Naive thymus-derived CD4-positive, alpha-beta T cell (primary cell): ENCODE measurements at regions of chr9 and their contacts with region 1.

Region 1: DNA sequence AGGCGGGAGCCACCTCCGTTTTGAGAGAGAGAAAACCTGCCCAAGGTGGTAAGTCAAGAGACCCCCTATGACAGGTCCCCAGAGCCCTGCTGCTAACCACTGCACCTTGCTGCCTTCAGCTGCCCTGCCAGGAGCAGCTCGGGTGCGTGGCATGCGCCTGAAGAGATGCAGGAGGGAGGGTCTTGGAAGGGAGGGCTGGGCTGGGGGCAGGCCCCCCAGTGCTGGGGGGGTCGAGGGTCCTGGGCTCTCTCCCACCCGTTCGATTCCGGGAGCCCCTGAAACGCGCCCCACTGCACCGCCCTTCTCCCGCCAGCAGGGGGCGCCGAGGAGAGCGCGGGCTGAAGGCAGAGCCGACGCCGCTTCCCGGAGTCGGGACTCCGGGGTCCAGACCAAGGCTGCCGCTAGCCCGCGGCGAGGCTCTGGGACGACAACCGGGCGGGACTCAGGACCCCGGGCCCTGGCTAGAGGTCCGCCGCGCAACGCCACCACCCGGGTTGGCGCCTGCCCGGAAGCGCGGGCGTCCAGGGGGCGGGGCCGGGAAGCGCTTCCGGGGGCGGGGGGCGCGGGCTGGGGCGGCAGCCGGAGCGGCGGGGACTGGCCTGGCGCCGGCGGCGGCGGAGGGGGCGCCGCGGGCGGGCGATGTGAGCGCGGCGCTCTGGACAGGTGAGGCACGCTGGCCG is at the start of gene ZBTB34:
- DNase-seq: peak; percentile 67 to 92 (median 82)
- ATAC-seq: peak; percentile 91
- H3K4me3 ChIP-seq: peak within 1 kb of the TSS; percentile 65
- H3K4me3 Mint-ChIP-seq: peak within 1 kb of the TSS; percentile 84 to 94 (median 90)
- H3K27ac ChIP-seq: peak within 1 kb of the TSS; percentile 84
- H3K27ac Mint-ChIP-seq: peak within 1 kb of the TSS; percentile 68 to 92 (median 85)
- H3K4me1 ChIP-seq: peaks cover 10 to 25% of the 10 kb centered on the region in 2 donors
- H3K4me1 Mint-ChIP-seq: peaks cover 18 to 40% (median 30%) of the 10 kb centered on the region in 7 donors
- H3K27me3 ChIP-seq: no peaks in the 10 kb centered on the region
- H3K27me3 Mint-ChIP-seq: peaks cover 0 to 38% (median 6%) of the 10 kb centered on the region in 5 donors
- total RNA-seq, gene ZBTB34: 5.2 to 9.4 (median 8.8) TPM

Region 2: GRCh38 chr9:126611592-126612325 is 248.5 kb before region 1 on chr9:
- CTCF ChIA-PET with region 1: no interaction called
- POLR2A ChIA-PET with region 1: no interaction called
- intact Hi-C with region 1: no loop called
- DNase-seq: peak; percentile 19 to 76 (median 55)
- ATAC-seq: peak; percentile 87
- H3K4me3 ChIP-seq: peak overlapping the region; percentile 18
- H3K4me3 Mint-ChIP-seq: peak overlapping the region; percentile 2 to 88 (median 80)
- H3K27ac ChIP-seq: no peak overlapping the region
- H3K27ac Mint-ChIP-seq: peak overlapping the region in 1 of 9 donors; percentile 52
- H3K4me1 ChIP-seq: peaks cover 6 to 7% of the 10 kb centered on the region in 2 donors
- H3K4me1 Mint-ChIP-seq: peaks cover 11 to 25% (median 16%) of the 10 kb centered on the region in 7 donors
- H3K27me3 ChIP-seq: peaks cover 10 to 12% of the 10 kb centered on the region in 2 donors
- H3K27me3 Mint-ChIP-seq: peaks cover 43 to 79% (median 66%) of the 10 kb centered on the region in 5 donors

Region 3: GRCh38 chr9:126804696-126805545 is 55.3 kb before region 1 on chr9 and contains the start of gene ZBTB43:
- CTCF ChIA-PET with region 1: no interaction called
- POLR2A ChIA-PET with region 1: no interaction called
- intact Hi-C with region 1: loop called (anchors 1 kb)
- DNase-seq: peak; percentile 95 to 98 (median 98)
- ATAC-seq: peak; percentile 90
- H3K4me3 ChIP-seq: peak within 1 kb of the TSS; percentile 72
- H3K4me3 Mint-ChIP-seq: peak within 1 kb of the TSS; percentile 81 to 99 (median 97)
- H3K27ac ChIP-seq: peak within 1 kb of the TSS; percentile 83
- H3K27ac Mint-ChIP-seq: peak within 1 kb of the TSS; percentile 91 to 99 (median 95)
- H3K4me1 ChIP-seq: peaks cover 10 to 17% of the 10 kb centered on the region in 2 donors
- H3K4me1 Mint-ChIP-seq: peaks cover 32 to 50% (median 41%) of the 10 kb centered on the region in 7 donors
- H3K27me3 ChIP-seq: no peaks in the 10 kb centered on the region
- H3K27me3 Mint-ChIP-seq: peaks cover 0 to 3% (median 0%) of the 10 kb centered on the region in 5 donors
- total RNA-seq, gene ZBTB43: 17.8 to 31.4 (median 28.2) TPM

Region 4: GRCh38 chr9:126814091-126814490 is 46.1 kb before region 1 on chr9:
- CTCF ChIA-PET with region 1: interaction called, 4 read pairs
- POLR2A ChIA-PET with region 1: no interaction called
- intact Hi-C with region 1: loop called in 1 of 2 experiments (anchors 2 kb)
- DNase-seq: no peak
- ATAC-seq: no peak
- H3K4me3 ChIP-seq: no peak overlapping the region
- H3K4me3 Mint-ChIP-seq: peak overlapping the region in 1 of 10 donors; percentile 32
- H3K27ac ChIP-seq: no peak overlapping the region
- H3K27ac Mint-ChIP-seq: peak overlapping the region in 1 of 9 donors; percentile 25
- H3K4me1 ChIP-seq: no peaks in the 10 kb centered on the region
- H3K4me1 Mint-ChIP-seq: peaks cover 11 to 36% (median 28%) of the 10 kb centered on the region in 7 donors
- H3K27me3 ChIP-seq: no peaks in the 10 kb centered on the region
- H3K27me3 Mint-ChIP-seq: no peaks in the 10 kb centered on the region

Region 5: DNA sequence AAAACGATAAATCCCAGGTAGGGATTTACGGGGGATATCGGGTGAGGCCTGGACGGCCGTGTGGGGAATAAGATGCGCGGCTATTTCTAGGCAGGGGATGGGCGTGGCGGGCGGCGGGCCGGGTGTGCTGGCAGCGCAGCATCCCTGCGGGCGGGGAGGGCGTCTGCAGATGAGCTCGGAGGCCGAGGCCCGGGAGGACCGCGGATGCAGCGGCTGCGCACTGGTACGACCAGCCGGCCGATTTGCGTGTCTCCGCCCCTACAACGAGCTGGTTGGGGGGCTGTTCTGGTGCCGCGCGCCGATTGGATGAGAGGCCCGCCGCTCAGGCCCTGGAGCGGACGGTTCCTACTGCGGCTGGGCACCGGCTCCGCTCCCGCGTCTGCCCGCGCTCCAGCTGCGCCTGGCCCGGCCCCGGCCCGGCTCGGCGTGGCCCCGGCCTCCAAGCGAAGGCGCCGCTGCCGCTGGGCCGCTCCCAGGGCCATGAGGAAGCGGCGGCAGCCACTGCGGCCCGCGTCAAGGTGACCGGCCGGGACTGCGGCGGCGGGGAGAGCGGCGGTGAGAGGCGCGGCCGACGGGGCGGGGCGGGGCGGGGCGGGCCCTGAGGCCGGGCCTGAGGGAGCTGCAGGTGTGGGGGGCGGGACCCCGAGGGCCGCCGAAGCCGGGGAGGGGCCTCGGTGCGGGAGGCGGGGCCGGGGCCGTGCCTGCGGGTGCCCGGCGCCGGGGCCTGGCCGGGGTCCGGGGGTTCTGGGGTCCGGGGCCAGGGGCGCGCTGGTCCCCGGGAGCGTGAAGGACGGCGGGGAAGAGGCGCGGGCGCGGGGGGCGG is 54.5 kb after region 1 on chr9 and contains the start of gene RALGPS1:
- CTCF ChIA-PET with region 1: interaction called, 4 read pairs
- POLR2A ChIA-PET with region 1: no interaction called
- intact Hi-C with region 1: loop called (anchors 1 to 2 kb)
- DNase-seq: peak; percentile 68 to 88 (median 81)
- ATAC-seq: peak; percentile 98
- H3K4me3 ChIP-seq: peak within 1 kb of the TSS; percentile 47
- H3K4me3 Mint-ChIP-seq: peak within 1 kb of the TSS; percentile 73 to 90 (median 82)
- H3K27ac ChIP-seq: peak within 1 kb of the TSS; percentile 13
- H3K27ac Mint-ChIP-seq: peak within 1 kb of the TSS in 6 of 9 donors; percentile 14 to 89 (median 75)
- H3K4me1 ChIP-seq: no peaks in the 10 kb centered on the region
- H3K4me1 Mint-ChIP-seq: peaks cover 5 to 13% (median 7%) of the 10 kb centered on the region in 7 donors
- H3K27me3 ChIP-seq: no peaks in the 10 kb centered on the region
- H3K27me3 Mint-ChIP-seq: peaks cover 0 to 36% (median 0%) of the 10 kb centered on the region in 5 donors
- total RNA-seq, gene RALGPS1: 2.6 to 8.3 (median 5.8) TPM

Region 6: DNA sequence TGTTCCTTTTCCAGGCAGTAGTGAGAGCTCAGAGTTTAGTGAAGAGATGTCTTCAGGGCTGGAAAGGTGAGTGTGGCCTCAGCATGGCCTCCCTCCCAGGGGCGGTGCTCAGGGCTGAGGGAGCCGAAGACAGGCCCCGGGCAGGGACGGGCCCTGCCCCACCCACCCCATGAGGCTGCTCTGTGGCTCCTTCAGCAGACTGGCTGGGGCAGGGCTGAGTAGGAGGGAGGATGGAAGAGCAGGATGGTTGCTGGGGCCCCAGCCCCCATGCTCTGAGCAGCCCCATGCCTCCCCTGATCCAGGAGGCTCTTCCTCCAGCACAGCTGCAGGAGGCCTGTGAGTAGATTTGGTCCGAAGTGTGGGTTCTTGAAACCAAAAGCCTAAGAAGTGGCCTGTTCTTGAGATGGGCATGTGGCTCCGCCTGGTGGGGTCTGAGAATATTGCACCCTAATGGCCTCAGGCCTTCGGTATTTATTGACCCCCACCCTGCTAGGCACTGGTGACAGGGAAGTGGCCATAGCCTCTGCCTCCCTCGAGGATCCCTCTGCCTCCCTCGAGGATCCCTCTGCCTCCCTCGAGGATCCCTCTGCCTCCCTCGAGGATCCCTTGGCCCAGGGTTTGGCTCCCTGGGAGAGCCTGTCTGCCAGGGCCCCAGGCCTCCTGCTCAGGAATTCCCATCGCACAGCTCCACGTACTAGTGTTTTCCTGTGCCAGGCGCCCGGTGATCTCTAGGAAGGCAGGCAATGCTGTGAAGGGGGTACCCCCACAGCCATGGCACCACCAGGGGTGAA is 339.0 kb after region 1 on chr9:
- CTCF ChIA-PET with region 1: no interaction called
- POLR2A ChIA-PET with region 1: no interaction called
- intact Hi-C with region 1: loop called in 1 of 2 experiments (anchors 2 kb)
- DNase-seq: peak; percentile 56 to 78 (median 69)
- ATAC-seq: peak; percentile 86
- H3K4me3 ChIP-seq: no peak overlapping the region
- H3K4me3 Mint-ChIP-seq: no peak overlapping the region
- H3K27ac ChIP-seq: no peak overlapping the region
- H3K27ac Mint-ChIP-seq: no peak overlapping the region
- H3K4me1 ChIP-seq: peaks cover 0 to 5% of the 10 kb centered on the region in 2 donors
- H3K4me1 Mint-ChIP-seq: peaks cover 9 to 17% (median 13%) of the 10 kb centered on the region in 7 donors
- H3K27me3 ChIP-seq: no peaks in the 10 kb centered on the region
- H3K27me3 Mint-ChIP-seq: peaks cover 0 to 26% (median 2%) of the 10 kb centered on the region in 5 donors